ENCODE measurements at regions of chr2 and their contacts with region 1.

Region 1: DNA sequence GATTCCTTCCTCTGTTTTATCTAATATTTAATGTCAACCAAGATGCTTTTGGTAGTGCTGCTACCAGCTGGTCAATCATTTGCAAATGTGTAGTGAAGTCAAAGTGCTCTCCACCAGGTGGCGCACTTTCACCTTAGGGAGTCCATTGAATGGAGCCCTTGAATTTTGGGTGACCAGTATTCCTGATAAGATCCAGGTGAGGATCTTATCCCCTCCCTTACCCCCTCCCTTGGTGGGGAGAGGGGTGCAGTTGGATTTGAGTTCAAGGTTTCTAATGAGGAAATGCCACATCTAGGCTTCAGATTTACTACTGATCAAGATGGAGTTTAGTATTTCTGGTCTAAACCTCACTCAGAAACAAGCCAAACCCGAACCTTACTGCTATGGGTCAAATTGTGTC is 12.0 kb upstream of the E2F6 start:
- DNase-seq: peak; percentile 93
- ATAC-seq: peak; percentile 75
- H3K4me3 Mint-ChIP-seq: no peak overlapping the region
- H3K27ac Mint-ChIP-seq: no peak overlapping the region
- H3K4me1 Mint-ChIP-seq: peaks cover under 1% of the 10 kb centered on the region
- H3K27me3 Mint-ChIP-seq: peaks cover 21% of the 10 kb centered on the region
- CTCF ChIP-seq: peak; percentile 93

Region 2: GRCh38 chr2:11267931-11268330 is 210.1 kb before region 1 on chr2:
- CTCF ChIA-PET with region 1: no interaction called
- POLR2A ChIA-PET with region 1: no interaction called
- intact Hi-C with region 1: no loop called
- DNase-seq: no peak
- ATAC-seq: no peak
- H3K4me3 Mint-ChIP-seq: no peak overlapping the region
- H3K27ac Mint-ChIP-seq: no peak overlapping the region
- H3K4me1 Mint-ChIP-seq: peaks cover 9% of the 10 kb centered on the region
- H3K27me3 Mint-ChIP-seq: no peaks in the 10 kb centered on the region
- CTCF ChIP-seq: no peak

Region 3: DNA sequence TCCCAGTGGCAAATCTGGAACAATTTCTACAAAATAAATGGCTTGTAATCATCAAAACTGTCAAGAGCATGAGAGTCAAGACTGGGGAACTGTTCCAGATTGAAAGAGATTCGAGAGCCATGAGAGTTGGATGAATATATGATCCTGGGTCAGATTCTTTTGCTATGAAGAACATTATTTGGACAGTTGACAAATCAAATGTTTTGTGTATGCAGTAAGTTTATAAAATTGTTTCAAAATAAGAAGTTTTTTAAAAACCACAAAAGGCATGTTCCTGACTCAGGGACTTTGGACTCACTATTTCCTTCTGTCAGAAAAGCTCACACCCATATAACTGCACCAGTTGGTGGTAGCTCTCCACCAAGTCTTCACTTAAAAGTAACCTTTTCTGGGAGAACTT is 172.0 kb before region 1 on chr2:
- CTCF ChIA-PET with region 1: no interaction called
- POLR2A ChIA-PET with region 1: no interaction called
- intact Hi-C with region 1: no loop called
- DNase-seq: no peak
- ATAC-seq: no peak
- H3K4me3 Mint-ChIP-seq: no peak overlapping the region
- H3K27ac Mint-ChIP-seq: no peak overlapping the region
- H3K4me1 Mint-ChIP-seq: peaks cover 12% of the 10 kb centered on the region
- H3K27me3 Mint-ChIP-seq: no peaks in the 10 kb centered on the region
- CTCF ChIP-seq: no peak

Region 4: GRCh38 chr2:11465497-11466406 is 12.2 kb before region 1 on chr2 and contains the start of gene E2F6:
- CTCF ChIA-PET with region 1: interaction called, 25 read pairs
- POLR2A ChIA-PET with region 1: no interaction called
- intact Hi-C with region 1: no loop called
- DNase-seq: peak; percentile 88
- ATAC-seq: peak; percentile 82
- H3K4me3 Mint-ChIP-seq: peak within 1 kb of the TSS; percentile 86
- H3K27ac Mint-ChIP-seq: peak within 1 kb of the TSS; percentile 86
- H3K4me1 Mint-ChIP-seq: peaks cover 47% of the 10 kb centered on the region
- H3K27me3 Mint-ChIP-seq: no peaks in the 10 kb centered on the region
- CTCF ChIP-seq: no peak
- total RNA-seq, gene E2F6: 9.8 to 10.5 TPM

Region 5: GRCh38 chr2:11492720-11493119 is 14.7 kb after region 1 on chr2:
- CTCF ChIA-PET with region 1: interaction called, 14 read pairs
- POLR2A ChIA-PET with region 1: no interaction called
- intact Hi-C with region 1: no loop called
- DNase-seq: no peak
- ATAC-seq: no peak
- H3K4me3 Mint-ChIP-seq: no peak overlapping the region
- H3K27ac Mint-ChIP-seq: no peak overlapping the region
- H3K4me1 Mint-ChIP-seq: no peaks in the 10 kb centered on the region
- H3K27me3 Mint-ChIP-seq: peaks cover 11% of the 10 kb centered on the region
- CTCF ChIP-seq: no peak